ENCODE measurements at regions of chr3 and their contacts with region 1.

Region 1: GRCh38 chr3:52455283-52456168 is at the start of gene NISCH:
- DNase-seq: peak; percentile 98
- ATAC-seq: peak; percentile 88
- H3K4me3 Mint-ChIP-seq: peak within 1 kb of the TSS; percentile 96
- H3K27ac Mint-ChIP-seq: peak within 1 kb of the TSS; percentile 95
- H3K4me1 Mint-ChIP-seq: peaks cover 36% of the 10 kb centered on the region
- H3K27me3 Mint-ChIP-seq: no peaks in the 10 kb centered on the region
- total RNA-seq, gene NISCH: 61.4 to 68.9 TPM

Region 2: GRCh38 chr3:50600841-50601591 is 1854.5 kb before region 1 on chr3:
- CTCF ChIA-PET with region 1: no interaction called
- POLR2A ChIA-PET with region 1: no interaction called
- intact Hi-C with region 1: no loop called
- DNase-seq: peak; percentile 96
- ATAC-seq: peak; percentile 55
- H3K4me3 Mint-ChIP-seq: peak overlapping the region; percentile 96
- H3K27ac Mint-ChIP-seq: peak overlapping the region; percentile 100
- H3K4me1 Mint-ChIP-seq: peaks cover 83% of the 10 kb centered on the region
- H3K27me3 Mint-ChIP-seq: no peaks in the 10 kb centered on the region

Region 3: GRCh38 chr3:52291508-52292181 is 163.9 kb before region 1 on chr3:
- CTCF ChIA-PET with region 1: no interaction called
- POLR2A ChIA-PET with region 1: no interaction called
- intact Hi-C with region 1: loop called in 1 of 2 experiments (anchors 2 kb)
- DNase-seq: peak; percentile 66
- ATAC-seq: no peak
- H3K4me3 Mint-ChIP-seq: no peak overlapping the region
- H3K27ac Mint-ChIP-seq: no peak overlapping the region
- H3K4me1 Mint-ChIP-seq: peaks cover 16% of the 10 kb centered on the region
- H3K27me3 Mint-ChIP-seq: no peaks in the 10 kb centered on the region

Region 4: DNA sequence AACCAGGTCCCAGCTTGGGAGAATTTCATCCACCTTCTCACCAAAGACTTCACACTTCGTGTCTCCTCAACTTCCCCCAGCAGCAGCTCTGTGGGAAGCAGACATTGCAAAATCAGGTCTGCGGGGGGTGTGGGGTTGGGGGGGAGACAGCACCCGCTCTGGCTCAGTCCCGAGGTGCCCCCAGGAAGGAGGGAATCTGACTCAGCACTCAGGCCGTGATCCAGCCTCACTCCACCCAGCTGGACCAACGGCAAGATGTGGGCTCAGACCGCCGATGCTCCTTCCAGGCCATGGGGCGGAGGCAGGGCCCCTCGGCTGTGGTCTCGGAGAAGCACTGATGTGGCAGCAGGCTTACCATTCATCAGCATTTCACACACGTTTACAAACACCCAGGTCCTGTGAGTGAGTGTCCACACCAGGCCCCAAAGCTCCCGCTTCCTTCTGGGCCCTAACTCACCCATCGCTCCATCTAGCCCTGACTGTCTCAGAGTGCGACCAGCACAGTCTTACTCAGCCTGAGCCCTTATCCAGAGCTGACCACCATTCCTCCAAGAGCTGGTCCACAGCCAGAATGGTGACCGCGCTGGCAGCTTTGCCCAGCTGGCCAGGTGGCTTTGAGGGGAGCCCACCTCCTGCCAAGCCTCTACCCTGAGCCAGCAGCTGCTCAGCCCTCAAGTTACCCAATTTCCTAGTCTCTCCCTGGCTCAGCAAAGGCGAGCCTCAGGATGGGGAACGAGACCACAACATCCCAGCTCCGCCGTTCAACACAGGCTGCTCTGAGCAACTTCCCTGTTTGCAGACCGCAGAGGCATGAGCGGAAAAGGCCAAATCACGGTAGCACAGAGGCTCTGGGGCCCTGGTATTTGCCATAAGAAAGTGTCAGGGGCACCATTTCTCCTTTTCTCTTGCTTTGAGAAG is 42.9 kb after region 1 on chr3:
- CTCF ChIA-PET with region 1: no interaction called
- POLR2A ChIA-PET with region 1: no interaction called
- intact Hi-C with region 1: no loop called
- DNase-seq: no peak
- ATAC-seq: no peak
- H3K4me3 Mint-ChIP-seq: no peak overlapping the region
- H3K27ac Mint-ChIP-seq: no peak overlapping the region
- H3K4me1 Mint-ChIP-seq: no peaks in the 10 kb centered on the region
- H3K27me3 Mint-ChIP-seq: peaks cover 2% of the 10 kb centered on the region

Region 5: DNA sequence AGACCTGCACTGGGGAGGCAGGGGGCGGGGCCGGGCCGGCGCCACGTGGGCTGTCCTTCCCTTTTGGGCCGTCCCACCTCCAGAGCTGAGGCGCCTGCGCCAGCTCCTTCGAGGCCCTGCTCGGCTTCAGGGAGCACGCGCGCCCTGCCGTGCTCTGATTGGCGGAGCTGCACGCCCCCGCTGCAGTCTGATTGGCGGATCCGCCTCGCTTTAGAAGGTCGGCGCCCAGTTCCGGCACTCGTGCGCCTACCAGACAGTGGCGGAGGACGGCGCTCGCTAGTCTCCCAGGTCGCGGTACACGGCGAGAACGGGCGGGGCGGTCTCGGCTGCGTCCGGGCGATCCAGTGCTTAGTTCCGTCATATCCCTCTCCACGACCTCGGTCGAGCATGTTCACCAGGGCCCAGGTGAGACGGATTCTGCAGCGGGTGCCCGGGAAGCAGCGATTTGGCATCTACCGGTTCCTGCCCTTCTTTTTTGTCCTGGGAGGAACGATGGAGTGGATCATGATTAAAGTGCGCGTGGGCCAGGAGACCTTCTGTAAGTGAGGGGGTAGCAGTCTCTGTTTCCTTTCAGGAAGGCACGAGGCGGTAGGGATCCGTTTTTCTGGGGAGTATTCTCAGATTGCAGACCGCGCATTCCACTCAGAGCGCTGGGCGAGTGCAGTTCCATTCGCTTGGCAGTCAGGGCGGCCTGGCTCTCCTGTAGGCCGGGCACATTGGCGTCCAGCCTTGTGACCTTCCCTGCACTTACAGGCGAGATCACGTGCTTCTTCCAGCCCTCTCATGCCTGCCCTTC is 81.0 kb after region 1 on chr3 and contains the start of gene UQCC5:
- CTCF ChIA-PET with region 1: interaction called, 3 read pairs
- POLR2A ChIA-PET with region 1: no interaction called
- intact Hi-C with region 1: loop called (anchors 1 kb)
- DNase-seq: peak; percentile 99
- ATAC-seq: peak; percentile 91
- H3K4me3 Mint-ChIP-seq: peak within 1 kb of the TSS; percentile 100
- H3K27ac Mint-ChIP-seq: peak within 1 kb of the TSS; percentile 99
- H3K4me1 Mint-ChIP-seq: peaks cover 49% of the 10 kb centered on the region
- H3K27me3 Mint-ChIP-seq: no peaks in the 10 kb centered on the region
- total RNA-seq, gene UQCC5: 12.0 to 12.7 TPM

Measured in activated CD4-positive, alpha-beta T cell treated with anti-CD3 and anti-CD28 coated beads for 36 hours (primary cell).